Caco-2 (cell line): ENCODE measurements at regions of chr7 and their contacts with region 1.

Region 1: GRCh38 chr7:49852619-49853462 is 79.4 kb downstream of the VWC2 start:
- DNase-seq: peak; percentile 49 to 59
- H3K4me3 ChIP-seq: no peak overlapping the region
- H3K4me3 Mint-ChIP-seq: no peak overlapping the region
- H3K27ac Mint-ChIP-seq: no peak overlapping the region
- H3K4me1 ChIP-seq: no peaks in the 10 kb centered on the region
- H3K4me1 Mint-ChIP-seq: no peaks in the 10 kb centered on the region
- H3K27me3 ChIP-seq: no peaks in the 10 kb centered on the region
- H3K27me3 Mint-ChIP-seq: peaks cover 5% of the 10 kb centered on the region
- CTCF ChIP-seq: peak; percentile 74 to 85

Region 2: GRCh38 chr7:48299580-48300169 is 1553.2 kb before region 1 on chr7:
- CTCF ChIA-PET with region 1: no interaction called
- POLR2A ChIA-PET with region 1: no interaction called
- intact Hi-C with region 1: loop called (anchors 1 kb)
- DNase-seq: peak; percentile 50 to 68
- H3K4me3 ChIP-seq: no peak overlapping the region
- H3K4me3 Mint-ChIP-seq: no peak overlapping the region
- H3K27ac Mint-ChIP-seq: no peak overlapping the region
- H3K4me1 ChIP-seq: no peaks in the 10 kb centered on the region
- H3K4me1 Mint-ChIP-seq: no peaks in the 10 kb centered on the region
- H3K27me3 ChIP-seq: no peaks in the 10 kb centered on the region; the same call in 1 of the 2 replicates
- H3K27me3 Mint-ChIP-seq: peaks cover 12% of the 10 kb centered on the region
- CTCF ChIP-seq: peak; percentile 57 to 80

Region 3: GRCh38 chr7:48617993-48618392 is 1234.8 kb before region 1 on chr7:
- CTCF ChIA-PET with region 1: no interaction called
- POLR2A ChIA-PET with region 1: no interaction called
- intact Hi-C with region 1: loop called (anchors 10 kb)
- DNase-seq: peak in 1 of 2 experiments; percentile 5
- H3K4me3 ChIP-seq: no peak overlapping the region
- H3K4me3 Mint-ChIP-seq: no peak overlapping the region
- H3K27ac Mint-ChIP-seq: no peak overlapping the region
- H3K4me1 ChIP-seq: no peaks in the 10 kb centered on the region
- H3K4me1 Mint-ChIP-seq: no peaks in the 10 kb centered on the region
- H3K27me3 ChIP-seq: no peaks in the 10 kb centered on the region; the same call in none of the 2 replicates
- H3K27me3 Mint-ChIP-seq: peaks cover 19% of the 10 kb centered on the region
- CTCF ChIP-seq: no peak

Region 4: GRCh38 chr7:49001610-49002033 is 851.2 kb before region 1 on chr7:
- CTCF ChIA-PET with region 1: interaction called, 3 read pairs
- POLR2A ChIA-PET with region 1: no interaction called
- intact Hi-C with region 1: loop called (anchors 1 kb)
- DNase-seq: peak; percentile 56 to 64
- H3K4me3 ChIP-seq: no peak overlapping the region
- H3K4me3 Mint-ChIP-seq: no peak overlapping the region
- H3K27ac Mint-ChIP-seq: no peak overlapping the region
- H3K4me1 ChIP-seq: no peaks in the 10 kb centered on the region
- H3K4me1 Mint-ChIP-seq: no peaks in the 10 kb centered on the region
- H3K27me3 ChIP-seq: no peaks in the 10 kb centered on the region
- H3K27me3 Mint-ChIP-seq: no peaks in the 10 kb centered on the region
- CTCF ChIP-seq: peak; percentile 60 to 70

Region 5: GRCh38 chr7:49483142-49483541 is 369.7 kb before region 1 on chr7:
- CTCF ChIA-PET with region 1: no interaction called
- POLR2A ChIA-PET with region 1: no interaction called
- intact Hi-C with region 1: loop called (anchors 1 kb)
- DNase-seq: peak; percentile 17 to 35
- H3K4me3 ChIP-seq: no peak overlapping the region
- H3K4me3 Mint-ChIP-seq: no peak overlapping the region
- H3K27ac Mint-ChIP-seq: no peak overlapping the region
- H3K4me1 ChIP-seq: peaks cover 6% of the 10 kb centered on the region; the same call in 1 of the 2 replicates
- H3K4me1 Mint-ChIP-seq: no peaks in the 10 kb centered on the region
- H3K27me3 ChIP-seq: no peaks in the 10 kb centered on the region
- H3K27me3 Mint-ChIP-seq: peaks cover 7% of the 10 kb centered on the region
- CTCF ChIP-seq: peak; percentile 26 to 47

Region 6: DNA sequence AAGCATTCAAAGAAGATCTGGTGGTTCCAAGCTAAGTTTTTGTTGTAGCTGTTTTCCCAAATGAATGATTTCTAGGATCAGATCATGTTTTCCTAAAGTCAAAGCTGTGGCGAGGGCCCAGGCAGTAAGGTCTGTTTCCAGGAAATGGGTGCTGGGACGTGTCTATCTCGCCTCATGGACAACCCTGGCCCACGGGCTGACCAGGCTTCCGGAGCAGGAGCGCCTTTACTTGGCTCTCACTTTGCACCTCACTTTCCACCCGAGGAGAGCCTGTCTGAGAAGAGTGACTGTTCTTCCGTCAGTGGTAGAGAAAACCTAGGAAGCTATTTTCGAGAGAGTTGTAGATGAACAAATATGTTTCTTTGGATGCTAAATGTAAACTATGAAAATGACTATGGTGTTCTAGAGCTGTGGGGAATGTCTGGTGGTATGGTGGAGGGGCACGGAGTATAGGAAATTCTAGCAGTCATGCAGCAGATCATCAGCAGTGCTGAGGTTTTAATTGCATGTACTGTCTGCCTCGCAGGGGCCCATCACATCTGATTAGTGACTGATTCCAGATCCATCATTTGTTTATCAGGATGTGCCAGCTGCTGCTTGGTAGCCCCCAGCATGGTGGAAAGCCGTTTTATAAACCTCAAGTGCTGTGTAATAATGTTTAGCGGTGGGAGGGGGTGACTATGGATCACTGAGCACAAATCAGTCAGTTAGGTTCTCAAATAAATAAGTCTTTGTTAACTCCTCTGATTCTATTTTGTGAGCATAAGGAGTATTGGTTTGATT is 12.8 kb before region 1 on chr7:
- CTCF ChIA-PET with region 1: no interaction called
- POLR2A ChIA-PET with region 1: no interaction called
- intact Hi-C with region 1: no loop called
- DNase-seq: no peak
- H3K4me3 ChIP-seq: no peak overlapping the region
- H3K4me3 Mint-ChIP-seq: no peak overlapping the region
- H3K27ac Mint-ChIP-seq: no peak overlapping the region
- H3K4me1 ChIP-seq: no peaks in the 10 kb centered on the region
- H3K4me1 Mint-ChIP-seq: no peaks in the 10 kb centered on the region
- H3K27me3 ChIP-seq: no peaks in the 10 kb centered on the region
- H3K27me3 Mint-ChIP-seq: peaks cover 15% of the 10 kb centered on the region
- CTCF ChIP-seq: no peak

Region 7: GRCh38 chr7:50022991-50023390 is 170.2 kb after region 1 on chr7:
- CTCF ChIA-PET with region 1: no interaction called
- POLR2A ChIA-PET with region 1: no interaction called
- intact Hi-C with region 1: no loop called
- DNase-seq: no peak
- H3K4me3 ChIP-seq: no peak overlapping the region
- H3K4me3 Mint-ChIP-seq: no peak overlapping the region
- H3K27ac Mint-ChIP-seq: no peak overlapping the region
- H3K4me1 ChIP-seq: no peaks in the 10 kb centered on the region
- H3K4me1 Mint-ChIP-seq: no peaks in the 10 kb centered on the region
- H3K27me3 ChIP-seq: no peaks in the 10 kb centered on the region
- H3K27me3 Mint-ChIP-seq: peaks cover 5% of the 10 kb centered on the region
- CTCF ChIP-seq: no peak

Region 8: GRCh38 chr7:50317221-50317678 is 464.4 kb after region 1 on chr7:
- CTCF ChIA-PET with region 1: no interaction called
- POLR2A ChIA-PET with region 1: no interaction called
- intact Hi-C with region 1: no loop called
- DNase-seq: no peak
- H3K4me3 ChIP-seq: no peak overlapping the region
- H3K4me3 Mint-ChIP-seq: no peak overlapping the region
- H3K27ac Mint-ChIP-seq: no peak overlapping the region
- H3K4me1 ChIP-seq: no peaks in the 10 kb centered on the region
- H3K4me1 Mint-ChIP-seq: no peaks in the 10 kb centered on the region
- H3K27me3 ChIP-seq: no peaks in the 10 kb centered on the region
- H3K27me3 Mint-ChIP-seq: peaks cover 37% of the 10 kb centered on the region
- CTCF ChIP-seq: no peak